Natural killer cell (primary cell): ENCODE measurements at regions of chr7 and their contacts with region 1.

Region 1: DNA sequence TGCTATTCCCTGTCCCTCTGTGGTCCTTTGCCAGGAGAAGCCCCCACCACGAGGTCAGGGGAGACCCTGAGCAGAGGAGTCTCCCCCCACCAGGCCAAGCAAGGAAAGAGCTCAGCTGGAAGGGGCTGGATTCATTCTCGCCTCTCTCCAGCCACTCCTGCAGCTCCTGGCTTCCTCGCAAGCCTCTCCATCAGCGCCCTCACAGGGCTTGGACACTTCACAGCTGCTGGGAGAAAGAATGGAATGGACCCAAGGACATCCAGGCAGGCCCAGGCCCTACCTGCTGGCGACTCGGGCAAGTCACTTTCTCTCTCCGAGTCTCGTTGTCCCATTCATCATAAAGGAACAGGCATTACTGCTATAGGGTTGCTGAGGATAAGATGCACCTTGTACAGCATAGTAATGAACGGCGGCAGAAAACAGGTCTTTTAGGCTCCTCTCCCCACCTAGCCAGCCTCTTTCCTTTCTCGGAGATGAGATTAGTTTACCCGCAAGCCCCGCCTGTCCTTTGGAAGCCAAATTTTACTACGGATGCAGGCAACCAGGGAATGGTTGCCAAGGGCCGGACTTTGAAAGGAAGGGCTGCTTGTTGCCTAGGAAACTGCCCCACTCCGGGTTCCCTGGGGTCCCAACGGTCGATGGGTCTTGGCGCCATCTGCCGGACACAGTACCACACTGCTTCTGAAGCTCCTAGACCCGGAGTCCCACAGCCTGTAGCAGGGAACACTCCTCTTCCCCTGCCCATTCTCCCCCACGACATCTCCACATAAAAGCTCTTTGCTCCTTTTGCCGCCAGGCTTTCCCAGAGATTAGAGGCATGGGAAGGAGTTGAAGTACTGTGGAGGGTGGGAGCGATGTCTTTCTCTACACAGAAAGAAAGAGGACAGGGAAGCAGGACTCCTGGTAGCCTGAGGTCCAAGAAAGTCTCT is 22.3 kb downstream of the IMPDH1 start:
- DNase-seq: peak; percentile 58 to 83
- ATAC-seq: peak; percentile 83 to 96 (median 94)
- H3K4me3 ChIP-seq: no peak overlapping the region
- H3K4me3 Mint-ChIP-seq: no peak overlapping the region
- H3K27ac ChIP-seq: no peak overlapping the region
- H3K27ac Mint-ChIP-seq: no peak overlapping the region
- H3K4me1 ChIP-seq: peaks cover 6% of the 10 kb centered on the region
- H3K4me1 Mint-ChIP-seq: peaks cover 0 to 14% of the 10 kb centered on the region in 2 donors
- H3K27me3 ChIP-seq: no peaks in the 10 kb centered on the region
- H3K27me3 Mint-ChIP-seq: no peaks in the 10 kb centered on the region
- CTCF ChIP-seq: peak; percentile 83

Region 2: DNA sequence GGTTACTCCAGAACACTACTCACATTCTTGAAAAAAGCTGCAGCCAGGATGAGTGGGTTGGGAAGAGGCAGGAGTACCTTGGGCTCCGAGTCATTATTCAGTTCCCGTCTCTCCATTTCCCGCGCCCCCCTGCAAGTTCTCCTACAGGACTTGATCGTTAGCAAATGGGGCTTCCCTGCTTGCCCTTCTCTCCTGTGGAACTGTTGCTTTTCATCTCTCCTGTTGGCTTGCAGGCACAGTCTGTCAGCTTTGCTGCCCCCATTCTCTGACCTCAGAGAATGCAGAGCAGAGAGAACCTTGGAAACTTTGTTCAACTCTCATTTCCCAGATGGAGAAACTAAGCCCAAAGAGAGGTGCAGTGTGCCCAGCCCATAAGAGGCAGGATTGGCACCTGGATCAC is 320.6 kb before region 1 on chr7:
- intact Hi-C with region 1: no loop called
- DNase-seq: no peak
- ATAC-seq: no peak
- H3K4me3 ChIP-seq: no peak overlapping the region
- H3K4me3 Mint-ChIP-seq: no peak overlapping the region
- H3K27ac ChIP-seq: no peak overlapping the region
- H3K27ac Mint-ChIP-seq: no peak overlapping the region
- H3K4me1 ChIP-seq: peaks cover 2% of the 10 kb centered on the region
- H3K4me1 Mint-ChIP-seq: peaks cover 5 to 6% of the 10 kb centered on the region in 2 donors
- H3K27me3 ChIP-seq: no peaks in the 10 kb centered on the region
- H3K27me3 Mint-ChIP-seq: no peaks in the 10 kb centered on the region
- CTCF ChIP-seq: no peak

Region 3: DNA sequence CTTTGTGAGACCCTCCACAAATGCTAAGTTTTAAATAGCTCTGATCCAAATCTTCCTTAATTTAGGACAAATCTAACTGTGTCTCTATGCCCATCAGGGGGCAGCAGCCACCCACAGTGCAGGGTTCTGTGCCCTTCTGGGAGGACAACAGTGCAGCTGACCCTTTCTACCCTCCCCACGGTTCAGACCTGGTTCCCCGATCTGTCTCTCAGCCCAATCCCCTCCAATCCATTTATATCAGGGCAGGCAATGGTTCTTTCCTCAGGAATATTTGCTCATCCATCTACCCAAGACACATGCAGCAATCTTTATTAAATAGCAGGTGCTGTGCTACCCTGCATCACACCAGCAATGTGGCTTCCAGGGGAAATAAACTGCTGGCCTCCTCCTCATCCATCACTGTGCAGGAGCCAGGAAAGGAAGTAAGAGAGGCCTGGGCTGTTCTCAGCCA is 39.8 kb before region 1 on chr7:
- intact Hi-C with region 1: loop called (anchors 1 kb)
- DNase-seq: peak in 1 of 2 donors; percentile 67
- ATAC-seq: no peak
- H3K4me3 ChIP-seq: no peak overlapping the region
- H3K4me3 Mint-ChIP-seq: peak overlapping the region; percentile 9
- H3K27ac ChIP-seq: no peak overlapping the region
- H3K27ac Mint-ChIP-seq: no peak overlapping the region
- H3K4me1 ChIP-seq: peaks cover 13% of the 10 kb centered on the region
- H3K4me1 Mint-ChIP-seq: peaks cover 6 to 11% of the 10 kb centered on the region in 2 donors
- H3K27me3 ChIP-seq: peaks cover 12% of the 10 kb centered on the region
- H3K27me3 Mint-ChIP-seq: peaks cover 10 to 21% of the 10 kb centered on the region in 2 donors
- CTCF ChIP-seq: peak; percentile 20

Region 4: GRCh38 chr7:128443831-128444600 is 56.5 kb after region 1 on chr7:
- intact Hi-C with region 1: no loop called
- DNase-seq: no peak
- ATAC-seq: peak in 1 of 3 donors; percentile 24
- H3K4me3 ChIP-seq: no peak overlapping the region
- H3K4me3 Mint-ChIP-seq: no peak overlapping the region
- H3K27ac ChIP-seq: no peak overlapping the region
- H3K27ac Mint-ChIP-seq: no peak overlapping the region
- H3K4me1 ChIP-seq: no peaks in the 10 kb centered on the region
- H3K4me1 Mint-ChIP-seq: no peaks in the 10 kb centered on the region
- H3K27me3 ChIP-seq: no peaks in the 10 kb centered on the region
- H3K27me3 Mint-ChIP-seq: peaks cover 0 to 4% of the 10 kb centered on the region in 2 donors
- CTCF ChIP-seq: no peak